Heart left ventricle (tissue), 16 donors: ENCODE measurements at regions of chr13 and their contacts with region 1.

Region 1: DNA sequence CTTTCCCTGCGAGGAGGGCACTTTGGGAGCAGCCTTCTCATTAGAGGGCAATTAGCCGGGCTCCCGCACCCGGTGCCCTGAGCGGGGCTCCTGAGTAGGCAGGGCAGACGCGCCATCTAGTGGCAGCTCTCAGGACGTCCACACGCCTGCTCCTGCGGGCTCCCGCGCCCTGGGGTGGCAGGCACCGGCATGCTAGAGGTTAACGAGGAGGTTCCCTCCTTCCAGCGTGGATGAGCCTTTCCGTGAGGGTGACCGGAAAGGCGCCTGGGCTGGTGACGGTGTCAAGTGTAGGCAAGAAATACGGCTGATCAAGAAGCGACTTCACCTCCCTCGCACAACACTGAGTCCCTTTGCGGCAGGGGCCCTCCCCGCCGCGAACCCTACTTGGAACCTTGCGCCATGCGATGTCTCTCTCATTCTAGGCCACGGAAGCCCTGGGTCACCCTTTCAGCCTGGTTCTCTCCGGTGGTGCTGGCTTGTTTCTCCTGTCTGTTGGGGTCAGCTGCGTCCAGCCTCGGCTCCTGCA is 67.7 kb downstream of the ALOX5AP start:
- DNase-seq: peak; percentile 83 to 93 (median 88)
- ATAC-seq: peak; percentile 89 to 98 (median 97)
- H3K4me3 ChIP-seq: peak overlapping the region in 9 of 12 donors; percentile 44 to 66 (median 47)
- H3K27ac ChIP-seq: peak overlapping the region in 3 of 12 donors; percentile 38 to 66 (median 54)
- H3K4me1 ChIP-seq: peaks cover 0 to 35% (median 19%) of the 10 kb centered on the region in 12 donors
- H3K27me3 ChIP-seq: no peaks in the 10 kb centered on the region
- CTCF ChIP-seq: peak; percentile 90 to 98 (median 96)
- POLR2A ChIP-seq: no peak

Region 2: DNA sequence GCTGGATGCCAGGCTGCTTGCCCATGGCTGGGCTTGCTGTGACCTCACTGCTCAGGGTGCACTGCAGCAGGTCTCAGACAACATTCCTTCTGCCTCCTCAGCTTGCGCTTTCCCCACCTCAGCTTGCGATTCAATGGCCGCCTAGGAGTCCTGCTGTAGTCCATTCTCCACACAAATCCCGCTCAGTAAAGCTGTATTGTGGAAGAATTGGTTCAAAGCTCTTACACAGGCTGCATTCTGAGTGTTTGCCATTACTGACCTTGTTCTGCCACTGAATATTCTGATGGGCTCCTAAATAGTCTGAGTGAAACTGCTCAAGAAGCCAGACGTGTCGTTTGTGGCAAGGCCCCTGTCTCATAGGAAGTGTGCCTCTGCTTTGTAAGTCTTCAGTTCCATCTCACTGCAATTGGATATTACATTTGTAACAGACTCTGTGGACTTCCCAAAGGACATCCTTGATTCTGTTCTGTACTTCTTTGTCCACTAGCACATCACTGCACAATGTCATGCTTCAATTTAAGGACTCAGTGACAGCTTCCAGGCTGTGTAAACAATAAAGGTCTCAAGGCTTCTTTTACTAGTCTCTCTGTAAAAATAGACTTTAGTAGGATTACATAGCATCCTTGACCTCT is 545.4 kb before region 1 on chr13:
- intact Hi-C with region 1: loop called in 1 of 10 experiments (anchors 10 kb)
- DNase-seq: peak in 2 of 5 donors; percentile 29 to 49
- ATAC-seq: peak; percentile 76 to 86 (median 81)
- H3K4me3 ChIP-seq: no peak overlapping the region
- H3K27ac ChIP-seq: peak overlapping the region in 9 of 12 donors; percentile 3 to 57 (median 28)
- H3K4me1 ChIP-seq: peaks cover 0 to 21% (median 9%) of the 10 kb centered on the region in 12 donors
- H3K27me3 ChIP-seq: no peaks in the 10 kb centered on the region
- CTCF ChIP-seq: no peak
- POLR2A ChIP-seq: no peak

Region 3: DNA sequence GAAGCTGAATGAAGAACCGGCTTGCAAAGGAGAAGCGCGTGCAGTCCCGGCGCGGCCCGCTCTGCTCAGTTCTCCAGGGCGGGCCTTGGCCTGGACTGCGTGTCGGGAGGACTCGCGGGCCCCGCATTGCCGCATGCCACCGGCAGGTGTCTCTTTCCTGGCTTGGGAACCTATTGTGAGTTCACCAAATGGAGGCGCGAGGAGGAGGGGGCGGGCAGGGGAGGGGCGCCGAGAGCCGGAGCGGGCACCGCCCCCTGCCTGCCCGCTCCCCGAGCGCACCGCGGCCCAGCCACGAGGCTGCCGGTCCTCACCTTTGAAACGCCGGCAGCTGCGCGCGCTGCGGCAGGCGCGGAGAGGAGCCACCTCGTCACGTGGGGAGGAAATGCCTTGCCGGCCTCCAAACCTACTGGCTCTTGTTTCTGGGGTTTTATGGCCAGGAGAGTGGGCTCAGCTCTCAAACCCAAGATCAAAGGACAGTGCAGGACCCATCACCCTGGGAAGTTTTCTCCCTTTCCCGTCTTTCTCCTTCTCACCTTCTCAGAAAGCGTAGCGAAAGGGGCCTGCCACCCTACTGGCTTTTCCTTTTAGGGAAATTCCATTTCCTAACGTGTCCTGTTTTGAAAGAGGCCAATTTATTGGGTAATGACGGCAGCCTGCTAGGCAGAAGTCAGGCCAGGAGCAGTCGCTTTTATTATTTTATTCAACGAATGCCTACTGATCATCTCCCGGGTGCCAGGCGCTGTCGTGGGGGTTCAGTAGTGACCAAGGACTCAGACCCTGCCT is 394.5 kb before region 1 on chr13:
- intact Hi-C with region 1: loop called in 1 of 10 experiments (anchors 5 kb)
- DNase-seq: peak; percentile 92 to 97 (median 95)
- ATAC-seq: peak; percentile 93 to 98 (median 97)
- H3K4me3 ChIP-seq: peak overlapping the region in 11 of 12 donors; percentile 12 to 60 (median 49)
- H3K27ac ChIP-seq: peak overlapping the region; percentile 55 to 92 (median 80)
- H3K4me1 ChIP-seq: peaks cover 0 to 22% (median 8%) of the 10 kb centered on the region in 12 donors
- H3K27me3 ChIP-seq: no peaks in the 10 kb centered on the region
- CTCF ChIP-seq: peak; percentile 73 to 96 (median 81)
- POLR2A ChIP-seq: no peak

Region 4: GRCh38 chr13:30673669-30674521 is 129.1 kb before region 1 on chr13:
- intact Hi-C with region 1: loop called in 9 of 10 experiments (anchors 1 to 5 kb)
- DNase-seq: peak; percentile 88 to 95 (median 91)
- ATAC-seq: peak; percentile 91 to 97 (median 95)
- H3K4me3 ChIP-seq: peak overlapping the region; percentile 30 to 80 (median 62)
- H3K27ac ChIP-seq: peak overlapping the region in 11 of 12 donors; percentile 64 to 86 (median 79)
- H3K4me1 ChIP-seq: peaks cover 0 to 12% (median 2%) of the 10 kb centered on the region in 12 donors
- H3K27me3 ChIP-seq: no peaks in the 10 kb centered on the region
- CTCF ChIP-seq: peak; percentile 48 to 96 (median 76)
- POLR2A ChIP-seq: peak in 1 of 2 donors; percentile 26

Region 5: GRCh38 chr13:30865123-30866049 is 62.4 kb after region 1 on chr13:
- intact Hi-C with region 1: loop called in 4 of 10 experiments (anchors 5 to 10 kb)
- DNase-seq: peak; percentile 75 to 88 (median 82)
- ATAC-seq: peak; percentile 77 to 87 (median 80)
- H3K4me3 ChIP-seq: no peak overlapping the region
- H3K27ac ChIP-seq: peak overlapping the region; percentile 14 to 82 (median 64)
- H3K4me1 ChIP-seq: peaks cover 0 to 47% (median 17%) of the 10 kb centered on the region in 12 donors
- H3K27me3 ChIP-seq: no peaks in the 10 kb centered on the region
- CTCF ChIP-seq: peak; percentile 83 to 95 (median 90)
- POLR2A ChIP-seq: no peak